ENCODE measurements at regions of chr19 and their contacts with region 1.

Region 1: GRCh38 chr19:1205114-1206062 is at the start of gene STK11:
- DNase-seq: peak; percentile 100
- ATAC-seq: peak; percentile 97
- H3K4me3 Mint-ChIP-seq: peak within 1 kb of the TSS; percentile 93
- H3K27ac Mint-ChIP-seq: peak within 1 kb of the TSS; percentile 77
- H3K4me1 Mint-ChIP-seq: peaks cover 23% of the 10 kb centered on the region
- H3K27me3 Mint-ChIP-seq: no peaks in the 10 kb centered on the region
- total RNA-seq, gene STK11: 49.2 to 61.5 TPM

Region 2: GRCh38 chr19:1074544-1075283 is 130.7 kb before region 1 on chr19:
- CTCF ChIA-PET with region 1: no interaction called
- POLR2A ChIA-PET with region 1: no interaction called
- intact Hi-C with region 1: loop called in 1 of 2 experiments (anchors 1 kb)
- DNase-seq: peak; percentile 93
- ATAC-seq: peak; percentile 22
- H3K4me3 Mint-ChIP-seq: peak overlapping the region; percentile 52
- H3K27ac Mint-ChIP-seq: peak overlapping the region; percentile 84
- H3K4me1 Mint-ChIP-seq: peaks cover 63% of the 10 kb centered on the region
- H3K27me3 Mint-ChIP-seq: no peaks in the 10 kb centered on the region

Region 3: DNA sequence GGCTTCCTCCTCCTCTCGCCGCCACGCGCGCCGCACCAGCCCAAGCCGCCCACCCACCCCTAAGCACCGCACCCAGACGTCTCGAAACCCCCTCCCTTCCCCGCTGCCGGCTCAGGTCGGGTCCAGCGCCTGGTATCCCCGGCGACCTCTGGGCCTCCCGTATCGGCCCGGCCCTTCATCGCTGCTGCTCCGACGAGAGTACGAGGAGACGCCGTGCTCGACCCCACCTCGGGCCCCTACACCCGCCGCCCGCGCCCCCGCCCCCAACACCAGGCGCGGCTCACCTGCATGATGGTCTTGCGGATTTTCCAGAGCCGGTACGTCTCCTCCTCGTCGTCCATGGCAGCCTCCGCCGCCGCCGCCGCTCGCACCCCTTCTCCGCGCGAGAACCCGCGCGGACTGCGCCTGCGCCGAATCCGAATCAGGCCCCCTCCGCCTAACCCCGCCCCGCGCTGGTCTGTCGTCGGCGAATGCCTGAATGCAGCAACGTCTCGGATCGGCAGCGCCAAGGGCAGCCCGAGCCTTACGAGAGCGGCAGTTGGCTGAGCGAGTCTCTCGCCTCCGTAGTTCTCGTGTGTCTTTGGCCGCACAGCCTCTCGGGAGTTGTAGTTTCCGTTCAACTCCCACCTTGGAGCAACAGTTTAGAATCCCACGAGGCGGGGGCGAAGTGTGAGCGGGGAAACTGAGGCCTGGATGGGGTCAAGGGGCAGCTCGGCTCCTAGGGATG is 110.2 kb before region 1 on chr19 and contains the start of gene POLR2E:
- CTCF ChIA-PET with region 1: interaction called, 3 read pairs
- POLR2A ChIA-PET with region 1: interaction called, 3 read pairs
- intact Hi-C with region 1: loop called in 1 of 2 experiments (anchors 1 kb)
- DNase-seq: peak; percentile 99
- ATAC-seq: peak; percentile 89
- H3K4me3 Mint-ChIP-seq: peak within 1 kb of the TSS; percentile 88
- H3K27ac Mint-ChIP-seq: peak within 1 kb of the TSS; percentile 93
- H3K4me1 Mint-ChIP-seq: peaks cover 49% of the 10 kb centered on the region
- H3K27me3 Mint-ChIP-seq: no peaks in the 10 kb centered on the region
- total RNA-seq, gene POLR2E: 171 to 229 TPM

Region 4: GRCh38 chr19:1173845-1174809 is 31.3 kb before region 1 on chr19 and contains the start of gene SBNO2:
- CTCF ChIA-PET with region 1: no interaction called
- POLR2A ChIA-PET with region 1: no interaction called
- intact Hi-C with region 1: loop called in 1 of 2 experiments (anchors 1 kb)
- DNase-seq: peak; percentile 96
- ATAC-seq: peak; percentile 93
- H3K4me3 Mint-ChIP-seq: peak within 1 kb of the TSS; percentile 89
- H3K27ac Mint-ChIP-seq: peak within 1 kb of the TSS; percentile 92
- H3K4me1 Mint-ChIP-seq: peaks cover 34% of the 10 kb centered on the region
- H3K27me3 Mint-ChIP-seq: no peaks in the 10 kb centered on the region
- total RNA-seq, gene SBNO2: 108 to 113 TPM

Region 5: GRCh38 chr19:1275260-1275975 is 70.0 kb after region 1 on chr19 and contains the start of gene FAM174C:
- CTCF ChIA-PET with region 1: no interaction called
- POLR2A ChIA-PET with region 1: no interaction called
- intact Hi-C with region 1: loop called in 1 of 2 experiments (anchors 1 kb)
- DNase-seq: peak; percentile 99
- ATAC-seq: peak; percentile 82
- H3K4me3 Mint-ChIP-seq: peak within 1 kb of the TSS; percentile 83
- H3K27ac Mint-ChIP-seq: peak within 1 kb of the TSS; percentile 95
- H3K4me1 Mint-ChIP-seq: peaks cover 54% of the 10 kb centered on the region
- H3K27me3 Mint-ChIP-seq: no peaks in the 10 kb centered on the region
- total RNA-seq, gene FAM174C: 75.3 to 88.3 TPM

Measured in activated CD4-positive, alpha-beta T cell treated with anti-CD3 and anti-CD28 coated beads for 36 hours (primary cell).